ENCODE measurements at regions of chr5 and their contacts with region 1.

Region 1: DNA sequence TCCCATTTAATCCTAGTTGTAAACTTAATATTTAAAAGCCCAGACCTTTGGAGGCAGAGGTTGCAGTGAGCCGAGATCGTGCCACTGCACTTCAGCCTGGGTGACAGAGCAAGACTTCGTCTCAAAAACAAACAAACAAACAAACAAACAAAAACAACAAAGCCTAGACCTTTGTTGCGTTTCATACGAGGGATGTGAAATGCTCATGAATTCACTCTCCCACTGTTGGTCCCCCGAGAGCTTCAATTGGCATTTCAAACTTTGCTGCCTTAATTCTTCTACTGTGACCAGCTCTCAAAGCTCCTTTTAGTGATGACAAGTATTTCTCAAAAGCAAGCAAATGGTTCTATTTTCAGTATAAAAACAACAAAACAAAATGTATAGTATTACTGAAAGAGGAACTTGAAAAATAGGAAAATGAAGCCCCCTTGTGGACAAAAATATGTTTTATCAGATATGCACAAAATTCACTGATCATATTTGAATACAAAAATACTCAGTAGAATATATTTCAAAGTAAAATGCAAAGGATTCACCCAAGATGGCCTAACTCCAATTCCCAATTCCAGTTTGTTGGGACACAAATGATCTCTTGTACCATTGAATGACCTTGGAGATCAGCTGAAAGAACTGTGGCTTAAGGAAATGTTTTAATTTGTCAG is 140.4 kb downstream of the ESM1 start:
- DNase-seq: no peak
- ATAC-seq: no peak
- H3K4me3 Mint-ChIP-seq: no peak overlapping the region
- H3K27ac Mint-ChIP-seq: no peak overlapping the region
- H3K4me1 Mint-ChIP-seq: peaks cover 6% of the 10 kb centered on the region
- H3K27me3 Mint-ChIP-seq: peaks cover 8% of the 10 kb centered on the region
- CTCF ChIP-seq: peak; percentile 73

Region 2: GRCh38 chr5:54517174-54518092 is 327.6 kb before region 1 on chr5 and contains the start of gene SNX18:
- CTCF ChIA-PET with region 1: interaction called, 121 read pairs
- POLR2A ChIA-PET with region 1: interaction called, 4 read pairs
- intact Hi-C with region 1: loop called (anchors 2 kb)
- DNase-seq: peak; percentile 90
- ATAC-seq: peak; percentile 83
- H3K4me3 Mint-ChIP-seq: peak within 1 kb of the TSS; percentile 75
- H3K27ac Mint-ChIP-seq: no peak within 1 kb of the TSS
- H3K4me1 Mint-ChIP-seq: peaks cover 38% of the 10 kb centered on the region
- H3K27me3 Mint-ChIP-seq: peaks cover 3% of the 10 kb centered on the region
- CTCF ChIP-seq: peak; percentile 91
- total RNA-seq, gene SNX18: 5.9 to 6.8 TPM

Region 3: GRCh38 chr5:54524704-54525103 is 320.3 kb before region 1 on chr5:
- CTCF ChIA-PET with region 1: interaction called, 121 read pairs
- POLR2A ChIA-PET with region 1: no interaction called
- intact Hi-C with region 1: no loop called
- DNase-seq: no peak
- ATAC-seq: no peak
- H3K4me3 Mint-ChIP-seq: no peak overlapping the region
- H3K27ac Mint-ChIP-seq: no peak overlapping the region
- H3K4me1 Mint-ChIP-seq: peaks cover 47% of the 10 kb centered on the region
- H3K27me3 Mint-ChIP-seq: no peaks in the 10 kb centered on the region
- CTCF ChIP-seq: no peak

Region 4: GRCh38 chr5:54646356-54647101 is 198.5 kb before region 1 on chr5:
- CTCF ChIA-PET with region 1: interaction called, 6 read pairs
- POLR2A ChIA-PET with region 1: no interaction called
- intact Hi-C with region 1: loop called (anchors 10 kb)
- DNase-seq: peak; percentile 91
- ATAC-seq: peak; percentile 94
- H3K4me3 Mint-ChIP-seq: peak overlapping the region; percentile 62
- H3K27ac Mint-ChIP-seq: peak overlapping the region; percentile 95
- H3K4me1 Mint-ChIP-seq: peaks cover 54% of the 10 kb centered on the region
- H3K27me3 Mint-ChIP-seq: no peaks in the 10 kb centered on the region
- CTCF ChIP-seq: no peak

Region 5: GRCh38 chr5:54673523-54674225 is 171.4 kb before region 1 on chr5:
- CTCF ChIA-PET with region 1: interaction called, 10 read pairs
- POLR2A ChIA-PET with region 1: interaction called, 3 read pairs
- intact Hi-C with region 1: no loop called
- DNase-seq: peak; percentile 73
- ATAC-seq: peak; percentile 90
- H3K4me3 Mint-ChIP-seq: no peak overlapping the region
- H3K27ac Mint-ChIP-seq: peak overlapping the region; percentile 4
- H3K4me1 Mint-ChIP-seq: peaks cover 52% of the 10 kb centered on the region
- H3K27me3 Mint-ChIP-seq: no peaks in the 10 kb centered on the region
- CTCF ChIP-seq: no peak

Region 6: DNA sequence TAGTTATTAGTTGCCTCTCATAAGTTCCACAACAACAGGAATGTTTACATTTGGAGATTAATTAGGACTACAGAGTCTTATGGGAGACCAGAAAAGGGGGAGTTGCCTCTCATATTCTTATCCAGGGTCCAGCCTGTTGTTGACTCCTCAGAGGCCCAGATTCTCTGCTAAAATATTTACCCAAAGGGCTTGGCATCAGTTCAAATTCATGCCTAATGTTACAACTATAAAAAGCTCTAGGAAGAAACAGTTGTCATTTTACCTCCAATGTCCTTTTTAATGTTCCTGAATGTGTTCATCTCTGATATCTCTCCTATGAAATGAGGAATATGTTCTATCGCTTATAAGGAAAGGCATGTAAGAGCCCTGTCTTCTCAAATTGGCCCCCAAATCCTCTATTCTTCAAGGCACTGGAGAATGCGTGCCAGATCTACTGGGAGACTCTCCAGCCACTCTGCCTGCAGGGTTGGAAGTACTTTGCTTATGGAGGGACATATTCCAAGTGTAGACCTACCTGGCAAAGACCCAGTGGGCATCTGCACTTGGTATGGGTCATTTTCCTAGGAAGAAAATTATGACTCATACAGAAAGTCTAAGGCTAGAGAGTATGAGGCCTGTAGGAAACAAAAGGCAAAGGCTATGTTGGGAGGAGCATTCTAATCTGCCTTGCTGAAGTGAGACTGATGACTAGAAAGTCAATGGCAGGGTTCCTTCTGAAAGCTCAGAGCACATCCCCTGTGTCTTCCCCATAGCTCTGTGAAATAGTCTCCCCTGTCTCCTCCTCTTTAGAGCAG is 52.2 kb before region 1 on chr5:
- CTCF ChIA-PET with region 1: interaction called, 14 read pairs
- POLR2A ChIA-PET with region 1: interaction called, 3 read pairs
- intact Hi-C with region 1: no loop called
- DNase-seq: no peak
- ATAC-seq: peak; percentile 22
- H3K4me3 Mint-ChIP-seq: peak overlapping the region; percentile 40
- H3K27ac Mint-ChIP-seq: peak overlapping the region; percentile 95
- H3K4me1 Mint-ChIP-seq: peaks cover 30% of the 10 kb centered on the region
- H3K27me3 Mint-ChIP-seq: peaks cover 7% of the 10 kb centered on the region
- CTCF ChIP-seq: no peak

Region 7: DNA sequence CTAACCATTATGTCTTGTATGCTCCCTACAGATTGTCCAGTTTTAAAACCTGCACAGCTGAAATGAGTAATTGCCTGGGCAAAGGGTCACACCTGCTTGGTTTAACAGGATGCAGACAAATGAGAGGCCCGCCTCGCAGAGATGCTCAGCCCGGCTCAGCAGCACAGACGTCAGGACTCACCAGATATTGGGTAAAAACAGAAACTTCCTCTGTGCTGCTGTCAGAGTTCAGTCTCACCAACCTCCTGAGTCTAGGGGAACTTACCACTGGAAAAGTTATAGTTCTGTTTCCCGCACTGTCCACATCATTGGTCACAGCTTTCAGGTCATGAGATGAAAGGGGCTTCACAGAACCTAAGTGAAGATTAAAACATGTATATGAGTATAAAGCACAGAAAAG is 12.2 kb before region 1 on chr5:
- CTCF ChIA-PET with region 1: interaction called, 20 read pairs
- POLR2A ChIA-PET with region 1: no interaction called
- intact Hi-C with region 1: no loop called
- DNase-seq: no peak
- ATAC-seq: peak; percentile 47
- H3K4me3 Mint-ChIP-seq: no peak overlapping the region
- H3K27ac Mint-ChIP-seq: no peak overlapping the region
- H3K4me1 Mint-ChIP-seq: peaks cover 4% of the 10 kb centered on the region
- H3K27me3 Mint-ChIP-seq: peaks cover under 1% of the 10 kb centered on the region
- CTCF ChIP-seq: no peak

Region 8: GRCh38 chr5:55176176-55176818 is 331.3 kb after region 1 on chr5:
- CTCF ChIA-PET with region 1: no interaction called
- POLR2A ChIA-PET with region 1: no interaction called
- intact Hi-C with region 1: no loop called
- DNase-seq: peak; percentile 34
- ATAC-seq: peak; percentile 26
- H3K4me3 Mint-ChIP-seq: peak overlapping the region; percentile 50
- H3K27ac Mint-ChIP-seq: no peak overlapping the region
- H3K4me1 Mint-ChIP-seq: peaks cover 31% of the 10 kb centered on the region
- H3K27me3 Mint-ChIP-seq: peaks cover 60% of the 10 kb centered on the region
- CTCF ChIP-seq: no peak